ENCODE measurements at regions of chr5 and their contacts with region 1.

Region 1: GRCh38 chr5:77775790-77776553 is at the start of gene TBCA:
- DNase-seq: peak; percentile 92
- H3K4me3 Mint-ChIP-seq: peak within 1 kb of the TSS; percentile 91
- H3K27ac Mint-ChIP-seq: peak within 1 kb of the TSS; percentile 97
- H3K4me1 Mint-ChIP-seq: peaks cover 48% of the 10 kb centered on the region
- H3K27me3 Mint-ChIP-seq: peaks cover 2% of the 10 kb centered on the region
- total RNA-seq, gene TBCA: 179 and 212 TPM in 2 replicates

Region 2: GRCh38 chr5:76855961-76856360 is 920.0 kb before region 1 on chr5:
- intact Hi-C with region 1: loop called (anchors 5 kb)
- DNase-seq: peak; percentile 26
- H3K4me3 Mint-ChIP-seq: peak overlapping the region; percentile 50
- H3K27ac Mint-ChIP-seq: peak overlapping the region; percentile 94
- H3K4me1 Mint-ChIP-seq: peaks cover 40% of the 10 kb centered on the region
- H3K27me3 Mint-ChIP-seq: no peaks in the 10 kb centered on the region

Region 3: DNA sequence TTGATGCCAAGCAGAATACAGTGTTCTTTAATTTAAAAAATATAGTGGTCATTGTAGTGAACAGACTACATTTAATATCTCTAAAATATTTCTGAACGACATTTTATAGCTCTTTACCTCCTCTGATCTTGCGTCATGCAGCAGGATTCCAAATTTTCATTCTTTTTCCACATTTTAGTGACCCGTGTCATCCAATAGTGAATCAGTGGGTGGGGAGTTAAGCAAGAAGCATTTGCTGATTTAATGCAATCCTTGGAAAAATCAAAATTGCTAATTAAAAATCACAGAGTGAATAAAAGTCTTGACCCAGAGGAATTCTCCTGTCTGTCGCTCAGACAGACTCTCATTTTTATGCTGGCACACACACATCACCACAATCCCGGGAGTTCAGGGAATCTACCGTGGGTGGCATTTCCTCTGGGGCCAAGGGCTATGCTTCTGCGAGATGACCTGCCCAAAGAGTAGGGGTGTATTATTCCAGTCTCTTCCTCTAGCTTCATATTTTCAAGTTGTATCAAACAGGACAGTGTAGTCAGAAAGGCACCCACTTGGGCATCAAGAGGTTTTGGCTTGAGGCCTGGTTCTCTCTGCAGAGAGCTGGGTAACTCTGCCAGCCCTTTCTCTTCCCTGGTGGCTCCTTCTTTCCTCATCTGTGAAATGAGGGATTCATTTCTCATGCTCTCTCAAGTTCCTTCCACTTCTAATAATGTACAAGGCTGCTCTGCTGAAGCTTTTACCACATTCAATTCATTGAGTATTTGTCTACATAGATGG is 112.7 kb before region 1 on chr5:
- intact Hi-C with region 1: loop called (anchors 10 kb)
- DNase-seq: no peak
- H3K4me3 Mint-ChIP-seq: no peak overlapping the region
- H3K27ac Mint-ChIP-seq: no peak overlapping the region
- H3K4me1 Mint-ChIP-seq: no peaks in the 10 kb centered on the region
- H3K27me3 Mint-ChIP-seq: no peaks in the 10 kb centered on the region

Region 4: DNA sequence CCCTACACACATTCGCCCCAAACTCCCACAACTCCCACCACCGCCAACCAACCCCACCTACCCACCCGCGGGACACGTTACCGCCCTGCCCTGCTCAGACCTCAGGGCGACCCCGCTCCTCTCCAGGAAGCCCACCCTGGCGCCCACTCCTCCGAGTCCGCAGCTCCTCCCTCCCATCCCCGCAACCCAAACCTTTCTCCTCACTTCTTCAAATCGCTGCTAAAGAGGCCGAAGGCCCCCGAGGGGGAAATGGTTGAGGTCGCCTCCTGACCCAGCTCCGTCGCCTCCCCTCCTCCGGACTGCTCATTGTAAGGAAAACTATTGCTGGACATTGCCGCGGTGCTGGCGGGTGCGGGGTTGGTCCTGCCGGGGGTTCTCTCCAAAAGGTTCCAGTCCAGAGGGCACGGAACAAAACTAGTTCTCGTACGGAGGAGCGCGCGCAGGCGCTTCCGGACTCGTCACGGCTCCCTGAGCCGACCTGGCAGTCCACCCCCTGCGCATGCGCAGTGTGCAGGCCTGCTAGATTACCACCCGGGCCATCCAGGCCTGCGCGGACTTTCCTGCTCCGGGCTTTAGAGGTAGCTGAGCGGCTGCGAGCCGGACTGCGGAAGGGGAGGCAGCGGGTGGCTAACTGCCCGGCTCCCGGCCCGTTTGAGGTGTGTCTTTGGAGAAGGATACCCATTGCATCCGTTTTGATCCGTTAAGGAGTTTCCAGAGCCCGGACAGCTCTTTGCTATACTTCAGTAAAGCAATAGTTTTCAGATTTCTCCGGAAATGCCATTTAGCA is 518.5 kb after region 1 on chr5 and contains the start of gene AP3B1:
- intact Hi-C with region 1: loop called (anchors 1 kb)
- DNase-seq: peak; percentile 98
- H3K4me3 Mint-ChIP-seq: peak within 1 kb of the TSS; percentile 90
- H3K27ac Mint-ChIP-seq: peak within 1 kb of the TSS; percentile 96
- H3K4me1 Mint-ChIP-seq: peaks cover 50% of the 10 kb centered on the region
- H3K27me3 Mint-ChIP-seq: peaks cover 20% of the 10 kb centered on the region
- total RNA-seq, gene AP3B1: 40.8 and 40.9 TPM in 2 replicates

Region 5: GRCh38 chr5:79514391-79515105 is 1738.6 kb after region 1 on chr5:
- intact Hi-C with region 1: loop called (anchors 10 kb)
- DNase-seq: peak; percentile 88
- H3K4me3 Mint-ChIP-seq: peak overlapping the region; percentile 99
- H3K27ac Mint-ChIP-seq: peak overlapping the region; percentile 100
- H3K4me1 Mint-ChIP-seq: peaks cover 43% of the 10 kb centered on the region
- H3K27me3 Mint-ChIP-seq: peaks cover 26% of the 10 kb centered on the region

Measured in activated T-helper 1 cell treated with anti-CD3 and anti-CD28 coated beads, Interleukin-12 subunit alpha, Interleukin-12 subunit beta, Interleukin-2, Interleukin-4 antibody, amounts not matched to agents 30 ng/mL and 10 ng/mL and 1 ng/mL, durations not matched to agents 14 hours and 24 hours and 36 hours (primary cell).